ENCODE measurements at regions of chr12 and their contacts with region 1.

Region 1: GRCh38 chr12:57782608-57783465 is at the start of gene TSFM:
- DNase-seq: peak; percentile 78
- H3K4me3 ChIP-seq: peak within 1 kb of the TSS; percentile 73 to 95 (median 94)
- H3K27ac ChIP-seq: peak within 1 kb of the TSS; percentile 70 to 88 (median 82)
- H3K4me1 ChIP-seq: peaks cover 10 to 25% (median 16%) of the 10 kb centered on the region in 3 donors
- H3K27me3 ChIP-seq: no peaks in the 10 kb centered on the region
- CTCF ChIP-seq: peak; percentile 92 to 98 (median 96)
- POLR2A ChIP-seq: peak in 2 of 4 donors; percentile 43 to 68
- total RNA-seq, gene TSFM: 18.5 to 37.2 (median 24.7) TPM

Region 2: DNA sequence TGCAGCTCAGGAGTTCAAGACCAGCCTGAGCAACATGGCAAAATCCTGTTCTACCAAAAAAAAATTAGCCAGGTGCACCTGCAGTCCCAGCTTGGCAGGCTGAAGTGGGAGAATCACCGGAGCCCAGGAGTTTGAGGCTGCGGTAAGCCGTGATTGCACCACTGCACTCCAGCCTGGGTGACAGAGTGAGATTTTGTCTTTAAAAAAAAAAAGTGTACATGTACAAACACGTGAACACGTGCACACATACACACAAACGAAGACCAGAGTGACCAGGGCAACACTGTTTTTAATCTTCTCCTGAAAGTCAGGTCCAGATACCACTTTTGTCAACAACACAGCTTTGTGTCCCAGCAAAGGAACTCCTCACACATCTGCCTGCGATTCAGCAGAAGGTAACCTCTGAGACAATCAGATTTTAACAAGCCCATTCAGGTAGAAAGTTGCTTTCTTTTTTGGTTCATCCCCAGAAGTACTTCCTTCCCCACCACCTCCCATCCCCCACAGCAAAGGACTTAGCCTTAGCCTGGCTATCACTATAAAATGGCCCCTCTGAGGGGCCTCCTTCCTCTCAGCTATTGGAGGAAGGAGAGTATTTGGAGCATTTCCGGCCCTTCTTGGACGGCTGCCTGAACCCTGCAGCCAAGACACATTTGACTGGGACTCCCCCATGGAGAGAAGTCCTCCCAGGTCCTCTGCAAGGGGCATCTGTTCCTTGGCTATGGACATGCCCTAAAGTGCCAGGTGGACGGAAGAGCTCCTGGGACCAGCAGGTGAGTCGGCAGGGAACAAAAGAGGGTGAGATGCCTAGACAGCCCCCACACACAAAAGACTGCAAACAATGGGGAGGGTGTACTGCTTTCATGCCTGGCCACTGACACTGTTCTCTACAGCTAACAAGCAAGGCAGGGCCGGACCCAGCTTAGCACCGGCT is 53.9 kb after region 1 on chr12:
- intact Hi-C with region 1: loop called (anchors 10 kb)
- DNase-seq: no peak
- H3K4me3 ChIP-seq: peak overlapping the region in 2 of 4 donors; percentile 22 to 46
- H3K27ac ChIP-seq: peak overlapping the region; percentile 21 to 71 (median 61)
- H3K4me1 ChIP-seq: peaks cover 81 to 100% (median 100%) of the 10 kb centered on the region in 3 donors
- H3K27me3 ChIP-seq: no peaks in the 10 kb centered on the region
- CTCF ChIP-seq: no peak
- POLR2A ChIP-seq: no peak